ENCODE measurements at regions of chr5 and their contacts with region 1.

Region 1: DNA sequence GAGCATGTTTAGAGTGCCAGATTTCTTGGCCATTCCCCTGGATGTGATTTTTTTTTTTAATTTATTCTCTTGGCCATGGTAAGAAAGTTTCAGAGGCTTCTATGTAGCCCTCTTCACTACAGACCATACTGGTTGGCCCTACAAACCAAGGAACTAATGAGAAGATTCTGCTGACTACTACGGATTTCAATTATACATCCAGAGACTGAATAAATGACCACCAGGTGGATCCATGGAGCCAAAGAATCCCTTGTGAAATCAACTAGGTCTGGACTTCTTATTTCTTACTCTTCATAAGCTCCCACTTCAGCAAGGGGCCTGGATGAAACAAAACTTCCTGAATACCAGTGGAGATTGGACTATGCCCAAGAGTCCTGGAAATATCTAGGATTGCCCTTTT is 27.6 kb downstream of the ZNF622 start:
- DNase-seq: no peak
- H3K4me3 ChIP-seq: no peak overlapping the region
- H3K27ac ChIP-seq: no peak overlapping the region
- H3K4me1 ChIP-seq: no peaks in the 10 kb centered on the region
- H3K27me3 ChIP-seq: no peaks in the 10 kb centered on the region
- CTCF ChIP-seq: peak; percentile 10 to 22

Region 2: DNA sequence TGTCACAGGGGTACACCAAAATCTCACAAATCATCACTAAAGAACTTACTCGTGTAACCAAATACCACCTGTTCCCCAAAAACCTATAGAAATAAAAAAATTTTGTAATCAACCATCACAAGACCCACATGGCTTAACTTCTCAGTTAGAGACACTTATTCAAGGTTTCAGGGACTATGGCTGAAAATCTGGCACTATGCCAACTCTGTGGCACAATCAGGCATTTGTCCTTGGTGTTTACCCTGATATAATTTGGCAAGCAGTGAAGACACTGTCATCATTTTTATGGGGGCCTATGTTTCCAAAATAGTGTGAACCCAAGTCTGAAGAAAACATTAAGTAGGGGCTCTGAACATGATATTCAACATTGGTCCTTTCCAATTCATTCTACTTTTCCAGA is 31.3 kb before region 1 on chr5:
- CTCF ChIA-PET with region 1: no interaction called
- dilution Hi-C with region 1: loop called (anchors 5 kb)
- in situ Hi-C with region 1: no loop called
- intact Hi-C with region 1: no loop called
- DNase-seq: no peak
- H3K4me3 ChIP-seq: no peak overlapping the region
- H3K27ac ChIP-seq: no peak overlapping the region
- H3K4me1 ChIP-seq: peaks cover 9% of the 10 kb centered on the region
- H3K27me3 ChIP-seq: no peaks in the 10 kb centered on the region
- CTCF ChIP-seq: no peak

Region 3: DNA sequence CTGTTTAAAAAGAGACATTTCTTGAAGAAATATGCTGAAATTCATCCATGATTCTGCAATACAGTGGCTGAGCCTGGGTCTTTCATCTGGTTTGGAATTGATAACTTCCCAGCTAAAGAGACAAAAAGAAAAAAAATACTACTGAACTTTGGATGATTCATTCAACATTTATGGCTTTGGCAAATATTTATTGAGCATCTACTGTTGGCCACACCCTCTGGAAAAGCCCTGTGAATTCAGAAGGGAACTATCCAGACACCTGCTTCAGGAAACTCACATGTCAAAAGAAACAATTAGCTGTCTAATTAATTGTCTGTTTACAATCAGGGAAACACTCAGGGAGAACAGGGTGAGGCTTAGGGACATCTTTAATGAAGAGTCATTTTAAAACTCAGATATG is 45.4 kb after region 1 on chr5:
- CTCF ChIA-PET with region 1: no interaction called
- dilution Hi-C with region 1: no loop called
- in situ Hi-C with region 1: no loop called
- intact Hi-C with region 1: loop called (anchors 1 kb)
- DNase-seq: peak; percentile 16
- H3K4me3 ChIP-seq: no peak overlapping the region
- H3K27ac ChIP-seq: no peak overlapping the region
- H3K4me1 ChIP-seq: peaks cover 18% of the 10 kb centered on the region
- H3K27me3 ChIP-seq: no peaks in the 10 kb centered on the region
- CTCF ChIP-seq: no peak

Region 4: DNA sequence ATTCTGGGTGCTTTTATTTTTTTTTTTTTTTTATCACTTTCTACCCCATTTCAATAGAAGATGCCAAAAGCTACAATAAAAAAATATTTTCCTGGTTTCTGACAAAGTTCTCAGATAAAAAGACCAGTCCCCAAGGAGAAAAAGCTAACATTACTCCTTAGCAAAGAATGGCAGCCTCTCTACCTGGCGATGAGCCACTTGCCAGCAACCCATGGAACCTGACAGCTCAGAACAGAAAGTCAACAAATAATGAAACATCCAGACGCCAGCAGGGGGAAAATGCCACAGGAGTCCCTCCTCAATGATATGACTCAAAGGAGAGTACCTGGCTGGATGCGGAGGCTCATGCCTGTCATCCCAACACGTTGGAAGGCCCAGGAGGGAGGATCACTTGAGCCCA is 374.9 kb after region 1 on chr5:
- CTCF ChIA-PET with region 1: no interaction called
- dilution Hi-C with region 1: no loop called
- in situ Hi-C with region 1: no loop called
- intact Hi-C with region 1: no loop called
- DNase-seq: peak; percentile 55
- H3K4me3 ChIP-seq: no peak overlapping the region
- H3K27ac ChIP-seq: no peak overlapping the region
- H3K4me1 ChIP-seq: peaks cover 9% of the 10 kb centered on the region
- H3K27me3 ChIP-seq: no peaks in the 10 kb centered on the region
- CTCF ChIP-seq: no peak

Measured in mammary epithelial cell (primary cell).